Activated CD4-positive, alpha-beta T cell treated with anti-CD3 and anti-CD28 coated beads, Interleukin-2, amount 10 ng/mL, durations not matched to agents 7 days and 5 days (primary cell): ENCODE measurements at regions of chr3 and their contacts with region 1.

Region 1: GRCh38 chr3:57397175-57398026 is 104.9 kb upstream of the ASB14 start:
- DNase-seq: peak; percentile 73
- H3K4me3 Mint-ChIP-seq: peak overlapping the region; percentile 5
- H3K27ac Mint-ChIP-seq: peak overlapping the region; percentile 85
- H3K4me1 Mint-ChIP-seq: peaks cover 19% of the 10 kb centered on the region
- H3K27me3 Mint-ChIP-seq: peaks cover 17% of the 10 kb centered on the region

Region 2: DNA sequence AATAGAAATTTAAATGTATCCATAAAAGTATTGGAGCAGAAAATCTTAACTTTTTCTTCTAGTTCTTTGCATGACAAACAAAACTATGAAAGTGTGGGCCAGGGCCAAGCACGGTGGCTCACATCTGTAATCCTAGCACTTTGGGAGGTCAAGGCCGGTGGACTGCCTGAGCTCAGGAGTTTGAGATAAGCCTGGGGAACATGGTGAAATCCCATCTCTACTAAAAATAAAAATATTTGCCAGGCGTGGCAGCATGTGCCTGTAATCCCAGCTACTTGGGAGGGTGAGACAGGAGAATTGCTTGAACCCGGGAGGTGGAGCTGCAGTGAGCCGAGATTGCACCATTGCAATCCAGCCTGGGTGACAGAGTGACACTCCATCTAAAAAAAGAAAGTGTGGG is 11.9 kb before region 1 on chr3:
- CTCF ChIA-PET with region 1: interaction called, 10 read pairs
- POLR2A ChIA-PET with region 1: no interaction called
- DNase-seq: no peak
- H3K4me3 Mint-ChIP-seq: no peak overlapping the region
- H3K27ac Mint-ChIP-seq: no peak overlapping the region
- H3K4me1 Mint-ChIP-seq: no peaks in the 10 kb centered on the region
- H3K27me3 Mint-ChIP-seq: peaks cover 2% of the 10 kb centered on the region